ENCODE measurements at regions of chr19 and their contacts with region 1.

Region 1: DNA sequence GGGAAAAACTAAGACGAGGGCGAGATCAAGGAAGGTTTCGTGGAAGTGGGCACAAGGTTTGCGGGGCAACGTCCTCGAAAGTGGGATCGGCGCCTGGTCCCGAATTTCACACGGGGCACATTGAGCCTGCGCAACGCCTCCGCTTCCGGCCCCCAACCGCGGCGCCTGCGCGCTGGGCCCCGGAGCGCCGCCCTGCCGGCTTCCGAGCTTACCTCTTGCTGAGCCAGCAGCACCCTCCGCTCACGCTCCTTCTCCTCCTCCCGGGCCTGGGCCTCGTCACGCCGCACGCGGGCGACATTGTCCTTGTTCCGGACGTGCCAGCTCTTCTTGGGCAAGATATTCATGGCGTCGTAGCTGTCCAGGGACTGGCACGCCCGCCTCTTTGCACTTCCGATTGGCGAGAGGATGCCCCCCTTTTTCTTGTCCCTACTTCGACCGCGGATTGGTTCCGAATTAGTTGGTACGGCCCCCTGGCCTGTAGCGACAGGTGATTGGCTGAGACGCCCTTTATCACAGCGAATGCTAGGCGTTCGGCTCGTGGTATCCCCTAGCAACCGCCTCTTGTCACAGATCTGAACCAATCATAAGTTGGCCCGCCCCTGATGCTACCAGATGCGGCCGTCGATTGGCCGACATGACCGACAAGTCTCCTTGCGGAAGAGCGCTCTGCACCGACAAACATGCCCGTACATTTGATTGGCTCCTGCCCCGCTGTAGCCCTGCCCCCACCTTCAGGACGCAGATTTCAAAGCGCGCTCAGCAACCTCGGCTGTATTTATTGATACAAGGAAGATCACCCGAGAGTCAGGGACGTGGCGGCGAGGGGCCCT is at the start of gene LENG1:
- DNase-seq: peak; percentile 99
- H3K4me3 Mint-ChIP-seq: peak within 1 kb of the TSS; percentile 99
- H3K27ac Mint-ChIP-seq: peak within 1 kb of the TSS; percentile 99
- H3K4me1 Mint-ChIP-seq: peaks cover 49% of the 10 kb centered on the region
- H3K27me3 Mint-ChIP-seq: no peaks in the 10 kb centered on the region
- total RNA-seq, gene LENG1: 4.0 and 5.1 TPM in 2 replicates

Region 2: GRCh38 chr19:53394974-53395839 is 764.4 kb before region 1 on chr19 and contains the start of gene ZNF765:
- intact Hi-C with region 1: no loop called
- DNase-seq: peak; percentile 91
- H3K4me3 Mint-ChIP-seq: peak within 1 kb of the TSS; percentile 98
- H3K27ac Mint-ChIP-seq: peak within 1 kb of the TSS; percentile 83
- H3K4me1 Mint-ChIP-seq: peaks cover 19% of the 10 kb centered on the region
- H3K27me3 Mint-ChIP-seq: no peaks in the 10 kb centered on the region
- total RNA-seq, gene ZNF765: 10.5 TPM in 2 replicates

Region 3: GRCh38 chr19:54115109-54116063 is 44.2 kb before region 1 on chr19 and contains the starts of genes PRPF31 and TFPT:
- intact Hi-C with region 1: loop called (anchors 1 kb)
- DNase-seq: peak; percentile 94
- H3K4me3 Mint-ChIP-seq: peak within 1 kb of the TSS; percentile 97
- H3K27ac Mint-ChIP-seq: peak within 1 kb of the TSS; percentile 92
- H3K4me1 Mint-ChIP-seq: peaks cover 21% of the 10 kb centered on the region
- H3K27me3 Mint-ChIP-seq: no peaks in the 10 kb centered on the region
- total RNA-seq, gene PRPF31: 90.6 and 94.2 TPM in 2 replicates
- total RNA-seq, gene TFPT: 29.3 TPM in 2 replicates

Region 4: GRCh38 chr19:54137086-54137921 is 22.3 kb before region 1 on chr19 and contains the start of gene CNOT3:
- intact Hi-C with region 1: loop called (anchors 1 kb)
- DNase-seq: peak; percentile 100
- H3K4me3 Mint-ChIP-seq: peak within 1 kb of the TSS; percentile 95
- H3K27ac Mint-ChIP-seq: peak within 1 kb of the TSS; percentile 92
- H3K4me1 Mint-ChIP-seq: peaks cover 32% of the 10 kb centered on the region
- H3K27me3 Mint-ChIP-seq: no peaks in the 10 kb centered on the region
- total RNA-seq, gene CNOT3: 61.6 and 67.5 TPM in 2 replicates

Region 5: DNA sequence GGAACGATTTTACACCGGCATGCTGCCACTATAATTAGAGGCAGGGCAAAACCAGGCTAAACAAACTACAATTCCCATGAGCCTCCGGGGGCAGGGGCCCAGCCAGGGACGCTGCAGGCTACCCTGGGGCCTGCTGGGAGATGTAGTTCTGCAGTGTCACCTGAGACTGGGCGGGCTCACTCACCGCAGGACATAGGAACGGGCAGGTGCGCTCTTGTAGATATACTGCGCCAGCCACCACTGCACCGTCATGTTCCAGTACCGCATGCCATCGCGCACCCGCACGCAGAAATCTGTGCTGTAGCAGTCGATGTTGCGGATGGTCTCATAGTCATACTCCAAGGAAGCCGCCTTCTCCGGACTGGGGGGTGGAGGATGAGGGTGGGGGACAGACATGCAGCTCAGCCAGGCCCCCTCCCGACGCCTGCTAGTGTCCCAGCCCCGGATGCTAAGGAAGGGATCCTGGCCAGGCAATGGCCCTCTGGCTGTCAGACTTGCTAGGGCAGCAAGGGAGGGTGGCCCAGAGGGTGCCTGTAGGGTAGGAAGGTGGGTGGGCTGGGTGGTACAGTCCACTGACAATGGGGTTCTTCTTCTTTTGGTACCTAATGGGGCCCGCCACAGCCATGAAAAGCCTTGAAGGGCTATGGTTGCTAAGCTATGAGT is 19.1 kb after region 1 on chr19:
- intact Hi-C with region 1: no loop called
- DNase-seq: no peak
- H3K4me3 Mint-ChIP-seq: no peak overlapping the region
- H3K27ac Mint-ChIP-seq: no peak overlapping the region
- H3K4me1 Mint-ChIP-seq: peaks cover under 1% of the 10 kb centered on the region
- H3K27me3 Mint-ChIP-seq: no peaks in the 10 kb centered on the region

Region 6: DNA sequence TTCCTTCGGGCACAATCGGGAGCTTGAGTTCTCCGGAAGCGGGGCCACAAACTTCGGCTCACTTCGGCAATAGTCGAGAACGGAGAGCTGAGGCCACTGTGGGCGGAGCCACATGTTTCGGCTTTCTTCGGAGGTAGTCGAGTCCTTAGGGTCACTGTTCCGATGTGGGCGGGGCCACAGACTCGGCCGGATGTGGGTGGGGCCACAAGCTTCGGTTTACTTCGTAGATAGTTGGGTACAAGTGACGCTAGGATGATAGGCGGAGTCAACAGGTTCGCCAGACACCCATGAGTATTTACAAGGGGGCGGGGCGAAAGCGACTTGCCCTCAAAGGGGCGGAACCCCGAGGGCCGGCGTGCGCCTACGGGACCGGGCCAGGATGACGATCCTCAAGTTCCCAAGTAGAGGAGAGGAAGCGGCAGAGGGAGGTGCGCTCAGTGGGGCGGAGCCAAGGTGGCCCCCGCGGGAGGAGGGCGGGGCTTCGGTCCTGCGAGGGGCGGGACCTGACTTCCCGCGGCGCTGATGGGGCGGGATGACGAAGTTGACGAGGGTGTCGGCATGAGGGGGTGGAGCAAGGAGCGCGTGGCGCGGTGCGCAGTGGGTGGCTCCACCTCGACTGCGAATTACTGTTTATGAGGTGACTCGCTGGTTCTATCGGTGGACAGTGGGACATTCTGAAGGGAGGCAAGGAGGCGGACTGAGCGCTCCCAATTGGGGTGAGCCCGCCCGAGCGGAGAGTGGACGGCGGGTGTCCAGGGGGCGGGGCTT is 30.4 kb after region 1 on chr19:
- intact Hi-C with region 1: loop called (anchors 1 kb)
- DNase-seq: peak; percentile 100
- H3K4me3 Mint-ChIP-seq: peak overlapping the region; percentile 89
- H3K27ac Mint-ChIP-seq: peak overlapping the region; percentile 98
- H3K4me1 Mint-ChIP-seq: peaks cover 26% of the 10 kb centered on the region
- H3K27me3 Mint-ChIP-seq: no peaks in the 10 kb centered on the region

Region 7: DNA sequence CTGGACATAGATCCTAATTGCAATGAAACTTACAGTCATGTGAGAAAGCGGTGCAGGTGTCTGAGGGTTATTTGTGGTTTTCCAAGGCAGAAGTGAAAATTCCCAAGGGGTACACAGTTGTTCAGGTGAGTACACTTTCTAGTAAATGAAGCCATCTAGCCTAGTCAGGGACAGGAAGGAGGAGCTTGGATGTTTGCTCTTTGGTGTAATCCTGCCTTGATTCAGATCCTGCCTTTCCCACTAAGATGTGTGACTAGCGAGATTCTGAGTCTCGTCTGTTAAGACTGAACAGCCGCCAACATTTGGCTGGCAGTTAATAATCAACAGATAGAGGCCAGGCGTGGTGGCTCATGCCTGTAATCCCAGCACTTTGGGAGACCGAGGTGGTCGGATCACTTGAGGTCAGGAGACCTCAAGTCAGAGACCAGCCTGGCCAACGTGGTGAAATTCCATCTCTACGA is 43.6 kb after region 1 on chr19:
- intact Hi-C with region 1: loop called (anchors 2 kb)
- DNase-seq: no peak
- H3K4me3 Mint-ChIP-seq: peak overlapping the region; percentile 99
- H3K27ac Mint-ChIP-seq: no peak overlapping the region
- H3K4me1 Mint-ChIP-seq: peaks cover 61% of the 10 kb centered on the region
- H3K27me3 Mint-ChIP-seq: no peaks in the 10 kb centered on the region

Region 8: DNA sequence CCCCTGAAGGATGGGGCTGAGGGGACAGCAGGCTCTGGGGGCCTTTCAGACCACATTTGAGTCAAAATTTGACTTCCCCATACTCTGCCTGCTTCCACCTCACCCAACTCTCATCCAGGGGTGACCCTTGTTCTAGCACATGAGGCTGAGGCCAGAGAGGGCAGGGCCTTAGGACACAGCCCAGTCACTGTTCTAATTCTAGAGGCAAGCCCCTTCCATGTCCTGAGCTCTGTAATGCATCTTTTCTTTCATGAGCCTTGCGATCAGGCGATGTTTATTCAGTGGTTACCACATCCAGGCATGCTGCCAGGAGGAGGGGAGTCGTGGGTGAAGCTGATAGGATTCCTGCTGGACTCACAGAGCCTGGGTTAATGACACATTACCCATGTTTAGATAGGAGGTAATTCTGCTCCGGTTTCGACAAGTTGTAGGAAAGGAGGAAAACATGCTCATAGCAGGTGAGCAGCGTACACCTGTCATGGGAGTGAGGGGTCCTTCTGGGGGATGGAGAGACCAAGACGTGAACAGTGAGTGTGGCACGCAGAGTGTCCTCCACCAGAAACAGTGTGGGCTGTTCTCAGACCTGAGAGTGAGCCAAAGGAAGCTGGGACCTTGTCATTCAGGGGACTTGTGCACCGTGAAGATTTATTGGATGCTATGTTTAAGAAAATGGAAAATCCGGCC is 50.4 kb after region 1 on chr19:
- intact Hi-C with region 1: loop called (anchors 2 kb)
- DNase-seq: no peak
- H3K4me3 Mint-ChIP-seq: peak overlapping the region; percentile 30
- H3K27ac Mint-ChIP-seq: peak overlapping the region; percentile 71
- H3K4me1 Mint-ChIP-seq: peaks cover 59% of the 10 kb centered on the region
- H3K27me3 Mint-ChIP-seq: no peaks in the 10 kb centered on the region

Region 9: GRCh38 chr19:54231077-54231931 is 71.7 kb after region 1 on chr19:
- intact Hi-C with region 1: loop called (anchors 1 kb)
- DNase-seq: peak; percentile 76
- H3K4me3 Mint-ChIP-seq: no peak overlapping the region
- H3K27ac Mint-ChIP-seq: no peak overlapping the region
- H3K4me1 Mint-ChIP-seq: peaks cover 7% of the 10 kb centered on the region
- H3K27me3 Mint-ChIP-seq: peaks cover 30% of the 10 kb centered on the region